AG04449 (cell line): ENCODE measurements at regions of chr16 and their contacts with region 1.

Region 1: GRCh38 chr16:83447560-83447959 is 360.2 kb upstream of the HSBP1 start:
- DNase-seq: no peak
- H3K4me3 ChIP-seq: no peak overlapping the region
- CTCF ChIP-seq: no peak

Region 2: DNA sequence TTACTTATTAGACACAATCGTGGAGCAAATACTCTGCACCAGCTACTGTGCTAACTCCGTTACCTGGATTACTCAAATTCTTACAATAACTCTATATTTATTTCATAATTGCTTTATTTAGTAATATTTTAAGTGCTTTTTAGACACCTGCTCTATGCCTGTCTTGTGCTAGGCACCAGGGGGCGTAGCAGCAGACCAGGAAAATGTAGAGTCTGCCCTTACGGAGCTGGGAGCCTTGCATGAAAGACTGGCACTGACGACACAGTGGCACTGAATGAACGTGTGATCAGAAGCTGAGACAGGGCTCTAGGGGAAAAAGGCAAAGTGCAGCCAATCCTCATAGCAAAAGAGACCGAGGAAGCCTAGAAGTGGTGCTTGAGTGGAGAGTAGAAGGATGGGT is 334.2 kb before region 1 on chr16:
- CTCF ChIA-PET with region 1: interaction called, 12 read pairs
- POLR2A ChIA-PET with region 1: no interaction called
- DNase-seq: no peak
- H3K4me3 ChIP-seq: no peak overlapping the region
- CTCF ChIP-seq: peak; percentile 56

Region 3: GRCh38 chr16:83338941-83339340 is 108.6 kb before region 1 on chr16:
- CTCF ChIA-PET with region 1: no interaction called
- POLR2A ChIA-PET with region 1: no interaction called
- DNase-seq: no peak
- H3K4me3 ChIP-seq: no peak overlapping the region
- CTCF ChIP-seq: no peak

Region 4: DNA sequence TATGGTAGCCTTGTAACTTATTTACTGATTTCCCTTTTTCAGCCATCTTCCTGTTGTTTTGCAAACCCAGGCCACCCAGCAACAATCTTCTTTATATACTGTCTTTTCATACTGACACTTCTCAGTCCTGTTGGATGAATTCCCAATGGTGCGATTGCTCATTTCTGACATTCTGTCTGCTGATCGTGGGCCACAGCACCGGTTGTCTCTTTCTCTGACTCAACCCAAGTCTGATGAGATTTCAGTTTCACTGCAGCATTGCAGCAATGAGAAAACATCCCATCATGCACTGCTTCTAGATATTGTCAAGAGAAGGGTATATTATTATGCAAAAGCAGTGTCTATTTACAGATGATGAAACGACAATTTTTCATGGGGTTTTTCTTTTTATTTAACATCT is 11.1 kb after region 1 on chr16:
- CTCF ChIA-PET with region 1: interaction called, 19 read pairs
- POLR2A ChIA-PET with region 1: no interaction called
- DNase-seq: peak; percentile 41
- H3K4me3 ChIP-seq: no peak overlapping the region
- CTCF ChIP-seq: no peak

Region 5: DNA sequence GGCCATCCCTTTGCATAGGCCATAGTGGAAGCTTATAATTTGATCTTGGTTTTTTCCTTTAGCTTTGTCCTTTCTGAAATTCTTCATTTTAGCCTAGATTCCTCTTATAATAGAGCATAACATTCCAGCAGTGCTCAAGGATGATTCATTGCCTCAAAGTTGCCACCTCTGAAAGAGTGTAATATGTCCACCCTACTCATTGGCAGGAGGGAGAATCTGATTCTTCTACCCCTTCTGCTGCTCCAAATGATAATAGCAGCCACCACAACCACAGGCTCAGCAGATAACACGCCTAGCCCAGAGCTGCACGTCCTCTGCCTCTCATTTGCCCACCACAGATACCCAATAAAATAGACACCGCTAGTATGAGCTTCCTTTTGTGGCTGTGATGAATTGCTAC is 22.9 kb after region 1 on chr16:
- CTCF ChIA-PET with region 1: interaction called, 10 read pairs
- POLR2A ChIA-PET with region 1: no interaction called
- DNase-seq: peak; percentile 28
- H3K4me3 ChIP-seq: no peak overlapping the region
- CTCF ChIP-seq: no peak